ENCODE measurements at regions of chr17 and their contacts with region 1.

Region 1: DNA sequence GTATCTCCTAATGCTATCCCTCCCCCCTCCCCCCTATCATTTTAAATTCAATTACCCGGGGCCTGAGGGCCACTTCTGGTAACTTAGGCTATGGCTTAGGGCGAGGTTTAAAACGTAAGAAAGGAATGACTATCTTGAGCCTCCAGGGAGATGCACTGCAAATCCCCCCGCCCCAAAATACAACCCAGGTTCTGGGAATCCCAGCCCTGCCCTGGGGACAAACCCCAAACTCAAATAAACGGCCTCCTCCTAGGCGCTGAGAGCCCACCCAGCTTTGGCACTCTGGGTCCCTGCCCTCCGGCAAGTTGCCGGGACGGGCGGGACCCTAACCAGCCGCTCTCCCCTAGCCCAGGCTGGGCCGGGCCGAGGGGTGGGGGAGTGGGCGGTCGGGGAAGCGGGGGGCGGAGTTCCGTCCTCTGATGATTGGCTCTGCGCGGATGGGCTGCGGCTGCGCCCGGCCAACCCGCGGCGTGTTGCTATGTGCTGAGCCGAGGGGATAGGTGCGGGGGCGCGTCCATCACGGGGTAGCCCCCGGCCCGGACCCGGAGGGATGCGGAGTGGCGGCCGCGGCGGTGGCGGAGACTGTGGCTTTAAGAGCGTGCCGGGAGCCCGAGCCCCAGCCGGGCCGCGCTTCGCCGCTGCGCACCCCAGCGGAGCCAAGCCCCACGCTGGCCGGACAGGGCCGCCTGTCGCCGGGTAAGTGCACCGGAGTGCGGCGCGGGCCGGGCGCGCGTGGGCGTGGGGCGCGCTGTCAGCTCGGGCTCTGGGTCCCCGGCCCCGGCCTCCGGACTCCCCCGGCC is at the start of gene YPEL2:
- DNase-seq: peak; percentile 93
- ATAC-seq: peak; percentile 92
- H3K4me3 ChIP-seq: peak within 1 kb of the TSS; percentile 45 to 93 (median 90)
- H3K4me3 Mint-ChIP-seq: peak within 1 kb of the TSS; percentile 97
- H3K27ac ChIP-seq: peak within 1 kb of the TSS; percentile 42 to 76
- H3K27ac Mint-ChIP-seq: peak within 1 kb of the TSS; percentile 89
- H3K4me1 ChIP-seq: peaks cover 33 to 45% of the 10 kb centered on the region in 2 donors
- H3K4me1 Mint-ChIP-seq: peaks cover 69% of the 10 kb centered on the region
- H3K27me3 ChIP-seq: no peaks in the 10 kb centered on the region
- H3K27me3 Mint-ChIP-seq: no peaks in the 10 kb centered on the region
- CTCF ChIP-seq: no peak
- total RNA-seq, gene YPEL2: 51.8 and 53.9 TPM in 2 replicates

Region 2: DNA sequence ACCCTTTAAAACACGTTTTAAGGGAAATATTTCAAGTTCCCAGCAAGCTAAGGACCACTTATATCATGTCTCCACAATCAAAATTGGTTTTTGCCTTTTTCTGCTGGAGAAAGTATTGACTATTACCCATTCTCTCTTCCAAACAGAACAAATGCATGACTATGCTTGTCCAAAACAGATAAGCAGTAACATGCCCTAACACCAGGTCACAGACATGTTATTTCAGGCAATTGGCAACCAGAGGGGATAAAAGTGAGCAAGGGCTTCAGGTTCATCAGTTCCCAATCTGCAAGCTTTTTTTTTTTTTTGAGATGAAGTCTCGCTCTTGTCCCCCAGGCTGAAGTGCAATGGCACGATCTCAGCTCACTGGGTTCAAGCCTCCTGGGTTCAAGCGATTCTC is 191.4 kb before region 1 on chr17:
- CTCF ChIA-PET with region 1: no interaction called
- POLR2A ChIA-PET with region 1: no interaction called
- intact Hi-C with region 1: no loop called
- DNase-seq: no peak
- ATAC-seq: no peak
- H3K4me3 ChIP-seq: no peak overlapping the region
- H3K4me3 Mint-ChIP-seq: no peak overlapping the region
- H3K27ac ChIP-seq: no peak overlapping the region
- H3K27ac Mint-ChIP-seq: no peak overlapping the region
- H3K4me1 ChIP-seq: no peaks in the 10 kb centered on the region
- H3K4me1 Mint-ChIP-seq: no peaks in the 10 kb centered on the region
- H3K27me3 ChIP-seq: no peaks in the 10 kb centered on the region
- H3K27me3 Mint-ChIP-seq: no peaks in the 10 kb centered on the region
- CTCF ChIP-seq: no peak

Region 3: GRCh38 chr17:59347975-59348391 is 16.7 kb after region 1 on chr17:
- CTCF ChIA-PET with region 1: interaction called, 10 read pairs
- POLR2A ChIA-PET with region 1: interaction called, 8 read pairs
- intact Hi-C with region 1: loop called (anchors 2 kb)
- DNase-seq: no peak
- ATAC-seq: no peak
- H3K4me3 ChIP-seq: no peak overlapping the region
- H3K4me3 Mint-ChIP-seq: no peak overlapping the region
- H3K27ac ChIP-seq: peak overlapping the region in 1 of 2 donors; percentile 11
- H3K27ac Mint-ChIP-seq: peak overlapping the region; percentile 61
- H3K4me1 ChIP-seq: peaks cover 54 to 63% of the 10 kb centered on the region in 2 donors
- H3K4me1 Mint-ChIP-seq: peaks cover 79% of the 10 kb centered on the region
- H3K27me3 ChIP-seq: no peaks in the 10 kb centered on the region
- H3K27me3 Mint-ChIP-seq: no peaks in the 10 kb centered on the region
- CTCF ChIP-seq: no peak

Region 4: GRCh38 chr17:59372138-59372857 is 41.0 kb after region 1 on chr17:
- CTCF ChIA-PET with region 1: interaction called, 11 read pairs
- POLR2A ChIA-PET with region 1: interaction called, 6 read pairs
- intact Hi-C with region 1: no loop called
- DNase-seq: peak; percentile 40
- ATAC-seq: peak; percentile 46
- H3K4me3 ChIP-seq: peak overlapping the region in 2 of 5 experiments; percentile 2 to 46
- H3K4me3 Mint-ChIP-seq: peak overlapping the region; percentile 66
- H3K27ac ChIP-seq: peak overlapping the region; percentile 55 to 71
- H3K27ac Mint-ChIP-seq: peak overlapping the region; percentile 88
- H3K4me1 ChIP-seq: peaks cover 69 to 94% of the 10 kb centered on the region in 2 donors
- H3K4me1 Mint-ChIP-seq: peaks cover 82% of the 10 kb centered on the region
- H3K27me3 ChIP-seq: no peaks in the 10 kb centered on the region
- H3K27me3 Mint-ChIP-seq: no peaks in the 10 kb centered on the region
- CTCF ChIP-seq: no peak

Region 5: GRCh38 chr17:59404471-59404870 is 73.1 kb after region 1 on chr17:
- CTCF ChIA-PET with region 1: interaction called, 14 read pairs
- POLR2A ChIA-PET with region 1: no interaction called
- intact Hi-C with region 1: no loop called
- DNase-seq: no peak
- ATAC-seq: no peak
- H3K4me3 ChIP-seq: no peak overlapping the region
- H3K4me3 Mint-ChIP-seq: no peak overlapping the region
- H3K27ac ChIP-seq: no peak overlapping the region
- H3K27ac Mint-ChIP-seq: no peak overlapping the region
- H3K4me1 ChIP-seq: peaks cover 3 to 5% of the 10 kb centered on the region in 2 donors
- H3K4me1 Mint-ChIP-seq: peaks cover 6% of the 10 kb centered on the region
- H3K27me3 ChIP-seq: no peaks in the 10 kb centered on the region
- H3K27me3 Mint-ChIP-seq: no peaks in the 10 kb centered on the region
- CTCF ChIP-seq: no peak

Region 6: DNA sequence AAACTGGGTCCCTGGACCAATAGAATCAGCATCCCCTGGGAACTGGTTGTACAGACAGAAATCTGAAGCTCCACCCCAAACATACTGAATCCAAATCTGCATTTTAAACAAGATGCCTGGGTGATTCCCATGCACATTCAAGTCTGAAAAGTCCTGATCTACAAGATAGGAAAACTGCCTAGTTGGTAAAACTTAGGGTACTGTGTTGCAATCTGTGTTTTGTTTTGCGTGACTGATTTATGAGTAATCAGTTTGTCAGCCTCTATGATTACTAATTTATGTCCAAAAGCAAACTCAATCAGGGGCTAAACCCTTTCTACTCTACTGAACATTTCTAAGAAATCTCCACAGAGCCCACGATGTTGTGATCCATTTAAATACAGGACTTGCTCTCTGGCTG is 103.9 kb after region 1 on chr17:
- CTCF ChIA-PET with region 1: interaction called, 358 read pairs
- POLR2A ChIA-PET with region 1: interaction called, 9 read pairs
- intact Hi-C with region 1: loop called (anchors 1 kb)
- DNase-seq: no peak
- ATAC-seq: no peak
- H3K4me3 ChIP-seq: no peak overlapping the region
- H3K4me3 Mint-ChIP-seq: no peak overlapping the region
- H3K27ac ChIP-seq: no peak overlapping the region
- H3K27ac Mint-ChIP-seq: no peak overlapping the region
- H3K4me1 ChIP-seq: peaks cover 31% of the 10 kb centered on the region in 2 donors
- H3K4me1 Mint-ChIP-seq: peaks cover 30% of the 10 kb centered on the region
- H3K27me3 ChIP-seq: no peaks in the 10 kb centered on the region
- H3K27me3 Mint-ChIP-seq: no peaks in the 10 kb centered on the region
- CTCF ChIP-seq: no peak

Region 7: GRCh38 chr17:59521204-59522126 is 190.1 kb after region 1 on chr17:
- CTCF ChIA-PET with region 1: interaction called, 18 read pairs
- POLR2A ChIA-PET with region 1: no interaction called
- intact Hi-C with region 1: loop called (anchors 1 kb)
- DNase-seq: peak; percentile 76
- ATAC-seq: peak; percentile 53
- H3K4me3 ChIP-seq: no peak overlapping the region
- H3K4me3 Mint-ChIP-seq: no peak overlapping the region
- H3K27ac ChIP-seq: no peak overlapping the region
- H3K27ac Mint-ChIP-seq: no peak overlapping the region
- H3K4me1 ChIP-seq: peaks cover 0 to 2% of the 10 kb centered on the region in 2 donors
- H3K4me1 Mint-ChIP-seq: peaks cover 4% of the 10 kb centered on the region
- H3K27me3 ChIP-seq: peaks cover 0 to 2% (median 0%) of the 10 kb centered on the region in 4 experiments
- H3K27me3 Mint-ChIP-seq: peaks cover 28% of the 10 kb centered on the region
- CTCF ChIP-seq: peak; percentile 93